Panc1 (cell line): ENCODE measurements at regions of chr6 and their contacts with region 1.

Region 1: DNA sequence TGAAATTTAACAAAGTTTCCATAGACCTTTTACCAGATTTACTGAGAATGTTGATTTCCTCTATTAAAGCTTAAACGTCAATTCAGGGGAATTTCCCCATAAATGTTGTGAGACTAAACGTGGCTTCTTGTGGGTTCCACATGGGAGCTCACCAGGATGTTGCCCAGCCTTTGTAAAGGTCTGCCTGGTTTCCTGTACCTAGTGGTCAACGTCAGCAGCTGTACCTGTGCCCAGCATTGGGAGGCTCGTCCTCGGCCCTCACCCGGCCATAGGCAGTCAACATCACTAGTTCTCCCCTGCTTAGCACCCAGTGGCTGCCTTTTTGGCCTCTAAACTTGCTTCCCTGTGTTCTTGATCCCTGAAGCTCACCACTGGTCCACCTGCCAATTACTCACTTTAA is 22.1 kb upstream of the CD83 start:
- DNase-seq: no peak
- ATAC-seq: no peak
- H3K4me3 ChIP-seq: no peak overlapping the region
- H3K27ac ChIP-seq: no peak overlapping the region
- H3K4me1 ChIP-seq: no peaks in the 10 kb centered on the region
- H3K27me3 ChIP-seq: no peaks in the 10 kb centered on the region
- CTCF ChIP-seq: no peak

Region 2: DNA sequence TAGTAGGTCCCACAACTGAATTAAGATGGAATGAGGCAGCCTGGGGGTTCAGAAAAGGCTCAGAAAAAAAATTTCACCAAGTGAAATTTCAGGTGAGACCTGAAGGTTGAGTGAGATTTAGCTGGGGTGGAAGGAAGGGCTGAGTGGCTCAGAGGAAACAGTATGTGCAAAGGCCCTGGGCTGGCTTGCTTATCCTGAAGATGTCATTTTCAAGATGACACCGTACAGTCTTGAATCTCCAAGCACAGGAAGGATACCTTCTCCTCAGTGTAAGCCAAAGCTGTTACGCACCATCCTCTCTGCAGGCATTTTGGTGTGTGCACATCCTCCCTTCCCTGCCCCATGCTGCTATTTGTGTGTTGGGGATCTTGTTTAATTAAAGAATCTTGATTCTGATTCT is 340.8 kb before region 1 on chr6:
- CTCF ChIA-PET with region 1: no interaction called
- POLR2A ChIA-PET with region 1: interaction called, 13 read pairs
- in situ Hi-C with region 1: no loop called
- intact Hi-C with region 1: no loop called
- DNase-seq: no peak
- ATAC-seq: no peak
- H3K4me3 ChIP-seq: no peak overlapping the region
- H3K27ac ChIP-seq: no peak overlapping the region
- H3K4me1 ChIP-seq: no peaks in the 10 kb centered on the region
- H3K27me3 ChIP-seq: no peaks in the 10 kb centered on the region
- CTCF ChIP-seq: no peak

Region 3: GRCh38 chr6:13846841-13847240 is 248.6 kb before region 1 on chr6:
- CTCF ChIA-PET with region 1: interaction called, 12 read pairs
- POLR2A ChIA-PET with region 1: no interaction called
- in situ Hi-C with region 1: no loop called
- intact Hi-C with region 1: no loop called
- DNase-seq: no peak
- ATAC-seq: peak; percentile 21; the same call in 1 of the 2 replicates
- H3K4me3 ChIP-seq: no peak overlapping the region
- H3K27ac ChIP-seq: no peak overlapping the region
- H3K4me1 ChIP-seq: no peaks in the 10 kb centered on the region
- H3K27me3 ChIP-seq: no peaks in the 10 kb centered on the region
- CTCF ChIP-seq: peak; percentile 32; the same call in 1 of the 2 replicates